Aorta (tissue), 5 donors: ENCODE measurements at regions of chr10 and their contacts with region 1.

Region 1: GRCh38 chr10:1679821-1680650 is 57.3 kb downstream of the ADARB2 start:
- DNase-seq: no peak
- ATAC-seq: no peak
- H3K4me3 ChIP-seq: no peak overlapping the region
- H3K27ac ChIP-seq: no peak overlapping the region
- H3K4me1 ChIP-seq: no peaks in the 10 kb centered on the region
- H3K27me3 ChIP-seq: no peaks in the 10 kb centered on the region

Region 2: GRCh38 chr10:1268831-1269230 is 411.2 kb before region 1 on chr10:
- intact Hi-C with region 1: no loop called
- DNase-seq: no peak
- ATAC-seq: no peak
- H3K4me3 ChIP-seq: no peak overlapping the region
- H3K27ac ChIP-seq: no peak overlapping the region
- H3K4me1 ChIP-seq: no peaks in the 10 kb centered on the region
- H3K27me3 ChIP-seq: no peaks in the 10 kb centered on the region

Region 3: DNA sequence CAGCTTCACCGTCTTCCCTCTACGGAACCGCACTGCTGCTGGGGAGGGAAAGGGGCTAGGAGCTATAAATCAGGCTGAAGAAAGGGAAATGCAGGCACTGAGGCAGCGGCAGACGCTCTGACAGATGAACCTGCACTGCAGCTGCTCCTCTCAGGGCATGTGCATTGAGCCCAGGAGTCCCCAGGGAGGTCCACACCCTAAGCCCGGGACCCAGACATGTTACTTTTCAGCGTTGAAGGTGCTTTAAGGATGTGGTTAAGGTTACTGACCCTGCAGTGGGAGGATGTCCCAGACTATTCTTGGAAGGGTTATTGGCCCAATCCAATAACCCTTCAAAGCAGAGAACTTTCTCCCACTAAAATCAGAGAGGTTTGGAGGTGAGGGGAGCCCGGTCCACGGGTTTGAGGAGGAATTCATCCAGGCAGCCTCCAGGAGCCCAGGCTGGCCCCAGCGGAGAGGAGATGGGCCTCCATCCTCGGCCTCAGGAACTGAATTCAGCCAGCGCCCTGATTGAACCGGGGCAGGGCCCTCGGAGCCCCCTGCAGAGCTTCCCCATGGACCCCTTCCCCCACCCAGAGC is 18.1 kb before region 1 on chr10:
- intact Hi-C with region 1: no loop called
- DNase-seq: no peak
- ATAC-seq: no peak
- H3K4me3 ChIP-seq: no peak overlapping the region
- H3K27ac ChIP-seq: no peak overlapping the region
- H3K4me1 ChIP-seq: no peaks in the 10 kb centered on the region
- H3K27me3 ChIP-seq: no peaks in the 10 kb centered on the region

Region 4: GRCh38 chr10:1980459-1980858 is 300.4 kb after region 1 on chr10:
- intact Hi-C with region 1: loop called in 1 of 2 experiments (anchors 5 kb)
- DNase-seq: no peak
- ATAC-seq: no peak
- H3K4me3 ChIP-seq: no peak overlapping the region
- H3K27ac ChIP-seq: no peak overlapping the region
- H3K4me1 ChIP-seq: no peaks in the 10 kb centered on the region
- H3K27me3 ChIP-seq: peaks cover 0 to 2% of the 10 kb centered on the region in 2 donors

Region 5: GRCh38 chr10:2681891-2682290 is 1001.9 kb after region 1 on chr10:
- intact Hi-C with region 1: no loop called
- DNase-seq: no peak
- ATAC-seq: no peak
- H3K4me3 ChIP-seq: no peak overlapping the region
- H3K27ac ChIP-seq: no peak overlapping the region
- H3K4me1 ChIP-seq: no peaks in the 10 kb centered on the region
- H3K27me3 ChIP-seq: peaks cover 0 to 3% of the 10 kb centered on the region in 2 donors